ENCODE measurements at regions of chr19 and their contacts with region 1.

Region 1: GRCh38 chr19:7953060-7953459 is 9.6 kb upstream of the TIMM44 start:
- DNase-seq: no peak
- ATAC-seq: peak in 1 of 2 donors; percentile 52

Region 2: GRCh38 chr19:8158411-8159074 is 205.5 kb after region 1 on chr19:
- intact Hi-C with region 1: loop called in 1 of 2 experiments (anchors 10 kb)
- DNase-seq: no peak
- ATAC-seq: peak; percentile 52 to 78

Measured in left cardiac atrium (tissue), 4 donors.